Ascending aorta (tissue), 2 donors: ENCODE measurements at regions of chr21 and their contacts with region 1.

Region 1: DNA sequence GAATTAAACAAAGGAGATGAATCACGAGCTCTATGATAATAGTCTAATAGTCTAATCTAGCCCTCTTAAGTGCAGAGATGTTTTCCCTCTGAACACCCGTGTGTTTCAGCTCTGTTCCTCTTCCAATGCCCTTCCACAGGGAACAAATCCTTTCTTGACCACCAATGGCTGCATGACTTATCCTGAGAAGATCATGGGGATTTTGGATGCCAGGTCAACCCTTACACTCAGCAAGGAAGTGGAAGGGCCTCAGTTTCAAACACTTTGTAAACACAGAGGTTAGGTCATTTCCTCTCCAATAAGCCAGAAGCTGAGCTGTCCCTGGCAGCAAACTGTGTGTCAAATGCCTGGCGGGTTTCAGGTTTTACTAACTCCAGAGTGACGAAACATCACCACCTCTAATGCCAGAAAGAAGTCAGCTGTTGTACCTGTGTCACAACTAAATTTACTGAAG is 200.0 kb downstream of the GABPA start:
- DNase-seq: peak; percentile 69 to 94
- H3K4me3 ChIP-seq: no peak overlapping the region
- H3K27ac ChIP-seq: peak overlapping the region; percentile 67 to 86
- H3K4me1 ChIP-seq: peaks cover 4 to 44% of the 10 kb centered on the region in 2 donors
- H3K27me3 ChIP-seq: no peaks in the 10 kb centered on the region
- CTCF ChIP-seq: no peak

Region 2: DNA sequence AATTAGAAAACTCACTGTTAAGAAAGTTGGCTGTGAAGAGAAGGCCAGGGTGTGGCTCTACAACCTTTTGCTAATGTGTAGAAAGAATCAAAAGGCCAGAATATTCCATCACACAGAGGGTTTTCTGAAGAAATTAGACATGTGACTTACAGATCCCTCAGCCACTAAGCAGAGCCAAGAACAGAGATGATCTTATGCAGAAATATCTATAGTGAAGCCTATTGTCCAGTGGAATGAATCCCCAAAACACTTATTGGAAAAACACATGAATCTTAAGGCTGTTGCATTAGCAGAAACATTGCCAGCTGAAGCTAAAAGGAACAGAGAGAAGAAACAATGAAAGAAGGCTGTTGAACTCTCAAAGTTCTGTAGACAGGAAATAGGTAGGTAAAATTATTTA is 1306.8 kb before region 1 on chr21:
- intact Hi-C with region 1: no loop called
- DNase-seq: no peak
- H3K4me3 ChIP-seq: no peak overlapping the region
- H3K27ac ChIP-seq: no peak overlapping the region
- H3K4me1 ChIP-seq: no peaks in the 10 kb centered on the region
- H3K27me3 ChIP-seq: no peaks in the 10 kb centered on the region
- CTCF ChIP-seq: no peak

Region 3: DNA sequence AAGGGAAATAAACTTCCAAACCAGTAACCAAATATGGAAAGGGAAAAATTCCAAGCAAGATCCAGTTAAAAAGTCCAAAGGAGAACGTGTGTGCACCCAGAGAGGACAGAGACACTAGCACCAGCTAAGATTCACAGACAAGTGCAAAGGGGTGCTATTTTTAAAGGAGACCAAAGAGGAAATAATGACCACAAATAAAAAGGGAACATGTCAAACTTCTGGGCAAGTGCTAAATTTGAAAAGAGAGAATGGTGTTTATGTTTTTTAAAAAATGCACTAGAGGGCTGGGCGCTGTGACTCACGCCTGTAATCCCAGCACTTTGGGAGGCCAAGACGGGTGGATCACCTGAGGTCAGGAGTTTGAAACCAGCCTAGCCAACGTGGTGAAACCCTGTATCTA is 287.2 kb before region 1 on chr21:
- intact Hi-C with region 1: no loop called
- DNase-seq: no peak
- H3K4me3 ChIP-seq: no peak overlapping the region
- H3K27ac ChIP-seq: no peak overlapping the region
- H3K4me1 ChIP-seq: no peaks in the 10 kb centered on the region
- H3K27me3 ChIP-seq: no peaks in the 10 kb centered on the region
- CTCF ChIP-seq: no peak

Region 4: DNA sequence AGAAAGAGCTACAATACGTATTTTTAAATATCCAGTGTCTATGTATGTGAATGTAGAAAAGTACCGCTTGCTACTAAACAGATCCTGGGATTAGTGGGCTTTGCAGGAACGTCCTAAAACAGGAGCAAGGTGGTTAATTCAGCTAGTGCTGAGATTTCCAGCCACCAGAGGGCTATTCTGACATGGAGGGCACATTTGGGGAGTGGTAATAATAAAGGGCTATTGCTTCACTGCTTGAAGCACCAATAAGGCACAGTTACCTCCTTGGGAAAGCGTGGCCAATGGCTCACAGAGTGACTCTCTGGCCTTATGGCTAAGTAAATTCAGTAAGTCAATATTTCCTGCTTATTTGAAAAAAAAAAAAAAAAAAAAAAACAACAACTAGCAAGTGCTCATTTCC is 47.6 kb before region 1 on chr21:
- intact Hi-C with region 1: no loop called
- DNase-seq: no peak
- H3K4me3 ChIP-seq: no peak overlapping the region
- H3K27ac ChIP-seq: no peak overlapping the region
- H3K4me1 ChIP-seq: no peaks in the 10 kb centered on the region
- H3K27me3 ChIP-seq: no peaks in the 10 kb centered on the region
- CTCF ChIP-seq: no peak

Region 5: DNA sequence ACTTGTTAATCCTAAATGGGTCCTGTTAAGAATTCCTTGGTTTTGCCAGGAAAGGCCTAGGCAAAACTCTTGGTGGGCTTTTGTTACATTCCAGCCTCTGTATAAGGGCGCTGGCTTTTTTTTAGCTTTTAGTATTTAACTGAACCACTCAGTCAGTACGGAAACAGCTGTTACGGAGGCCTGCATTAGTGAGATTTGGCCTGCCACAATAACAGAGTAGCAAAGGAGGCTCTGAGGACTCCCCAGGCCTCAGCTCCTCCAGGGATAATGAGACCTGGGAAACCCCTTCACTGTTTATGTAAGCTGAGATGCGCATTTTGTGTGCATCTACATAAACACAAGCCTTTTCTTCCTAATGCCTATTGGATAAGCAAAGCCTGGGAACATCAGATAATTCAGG is 25.6 kb after region 1 on chr21:
- intact Hi-C with region 1: loop called (anchors 2 kb)
- DNase-seq: no peak
- H3K4me3 ChIP-seq: no peak overlapping the region
- H3K27ac ChIP-seq: no peak overlapping the region
- H3K4me1 ChIP-seq: peaks cover 3 to 12% of the 10 kb centered on the region in 2 donors
- H3K27me3 ChIP-seq: no peaks in the 10 kb centered on the region
- CTCF ChIP-seq: no peak

Region 6: GRCh38 chr21:26127918-26128317 is 193.1 kb after region 1 on chr21:
- intact Hi-C with region 1: no loop called
- DNase-seq: no peak
- H3K4me3 ChIP-seq: no peak overlapping the region
- H3K27ac ChIP-seq: no peak overlapping the region
- H3K4me1 ChIP-seq: peaks cover 4 to 31% of the 10 kb centered on the region in 2 donors
- H3K27me3 ChIP-seq: no peaks in the 10 kb centered on the region
- CTCF ChIP-seq: no peak

Region 7: DNA sequence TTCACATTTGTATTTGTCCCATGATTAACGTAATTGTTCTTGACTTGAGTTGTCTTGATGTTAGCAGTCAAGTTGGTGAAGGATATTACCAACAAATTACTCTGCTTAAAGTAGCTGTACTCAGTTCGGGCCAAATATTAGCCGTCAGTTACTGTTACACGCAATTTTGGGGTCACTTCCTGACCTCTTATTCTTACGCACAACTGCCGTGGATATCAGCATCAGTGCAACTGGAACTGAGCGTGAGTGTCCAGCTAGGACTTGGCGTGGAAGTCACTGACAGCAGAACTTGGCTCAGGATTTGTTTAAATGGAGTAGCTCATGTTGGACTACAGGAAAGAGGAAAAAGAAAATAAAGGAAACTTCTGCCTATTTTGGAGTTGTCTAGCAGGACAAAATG is 854.0 kb after region 1 on chr21:
- intact Hi-C with region 1: loop called (anchors 10 kb)
- DNase-seq: peak in 1 of 2 donors; percentile 89
- H3K4me3 ChIP-seq: no peak overlapping the region
- H3K27ac ChIP-seq: peak overlapping the region; percentile 74 to 76
- H3K4me1 ChIP-seq: peaks cover 8 to 18% of the 10 kb centered on the region in 2 donors
- H3K27me3 ChIP-seq: no peaks in the 10 kb centered on the region
- CTCF ChIP-seq: no peak